ENCODE measurements at regions of chr6 and their contacts with region 1.

Region 1: GRCh38 chr6:33172688-33173534 is 19.4 kb downstream of the COL11A2 start:
- H3K4me3 Mint-ChIP-seq: no peak overlapping the region
- H3K27ac Mint-ChIP-seq: peak overlapping the region; percentile 28
- H3K4me1 Mint-ChIP-seq: peaks cover 19% of the 10 kb centered on the region
- H3K27me3 Mint-ChIP-seq: peaks cover 47% of the 10 kb centered on the region

Region 2: GRCh38 chr6:33118525-33119123 is 54.3 kb before region 1 on chr6:
- intact Hi-C with region 1: loop called (anchors 2 kb)
- H3K4me3 Mint-ChIP-seq: no peak overlapping the region
- H3K27ac Mint-ChIP-seq: no peak overlapping the region
- H3K4me1 Mint-ChIP-seq: peaks cover 39% of the 10 kb centered on the region
- H3K27me3 Mint-ChIP-seq: peaks cover 38% of the 10 kb centered on the region